ENCODE measurements at regions of chr16 and their contacts with region 1.

Region 1: DNA sequence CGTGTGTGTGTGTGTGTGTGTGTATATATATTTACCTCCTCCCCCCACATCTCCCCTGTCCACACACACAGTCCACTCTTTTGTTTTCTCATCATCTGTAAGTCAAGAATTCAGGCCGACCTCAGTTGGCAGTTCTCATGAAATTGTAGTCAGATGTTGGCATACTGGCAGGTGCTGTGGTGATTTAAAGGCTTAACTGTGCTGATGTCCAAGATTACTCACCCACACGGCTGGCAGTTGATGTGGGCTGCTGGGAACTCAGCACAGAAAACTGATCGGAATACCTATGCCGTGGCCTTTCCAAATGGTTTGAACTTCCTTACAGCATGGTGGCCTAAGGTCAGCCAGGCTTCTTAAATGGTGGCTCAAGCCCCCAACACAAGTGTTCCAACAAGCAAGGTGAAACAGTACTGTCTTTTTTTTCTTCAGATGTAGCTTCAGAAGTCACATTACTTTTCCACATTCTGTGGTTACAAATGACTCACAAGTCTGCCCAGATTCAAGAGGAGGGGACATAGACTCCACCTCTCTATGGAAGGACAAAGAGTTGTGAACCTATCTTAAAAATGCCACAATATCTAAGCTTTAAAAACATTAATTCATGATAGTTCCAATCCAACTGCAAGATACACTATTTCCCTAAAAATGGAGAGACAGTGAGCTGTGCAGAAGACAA is 198.5 kb upstream of the HS3ST4 start:
- DNase-seq: no peak
- ATAC-seq: no peak
- H3K4me3 ChIP-seq: no peak overlapping the region
- H3K27ac ChIP-seq: no peak overlapping the region
- H3K4me1 ChIP-seq: no peaks in the 10 kb centered on the region
- H3K27me3 ChIP-seq: no peaks in the 10 kb centered on the region

Region 2: GRCh38 chr16:25317732-25318316 is 175.4 kb before region 1 on chr16:
- intact Hi-C with region 1: no loop called
- DNase-seq: no peak
- ATAC-seq: no peak
- H3K4me3 ChIP-seq: no peak overlapping the region
- H3K27ac ChIP-seq: no peak overlapping the region
- H3K4me1 ChIP-seq: no peaks in the 10 kb centered on the region
- H3K27me3 ChIP-seq: no peaks in the 10 kb centered on the region

Region 3: GRCh38 chr16:25434064-25434463 is 59.2 kb before region 1 on chr16:
- intact Hi-C with region 1: loop called in 1 of 2 experiments (anchors 10 kb)
- DNase-seq: no peak
- ATAC-seq: no peak
- H3K4me3 ChIP-seq: no peak overlapping the region
- H3K27ac ChIP-seq: no peak overlapping the region
- H3K4me1 ChIP-seq: no peaks in the 10 kb centered on the region
- H3K27me3 ChIP-seq: no peaks in the 10 kb centered on the region

Measured in aorta (tissue), 5 donors.